ENCODE measurements at regions of chr22 and their contacts with region 1.

Region 1: DNA sequence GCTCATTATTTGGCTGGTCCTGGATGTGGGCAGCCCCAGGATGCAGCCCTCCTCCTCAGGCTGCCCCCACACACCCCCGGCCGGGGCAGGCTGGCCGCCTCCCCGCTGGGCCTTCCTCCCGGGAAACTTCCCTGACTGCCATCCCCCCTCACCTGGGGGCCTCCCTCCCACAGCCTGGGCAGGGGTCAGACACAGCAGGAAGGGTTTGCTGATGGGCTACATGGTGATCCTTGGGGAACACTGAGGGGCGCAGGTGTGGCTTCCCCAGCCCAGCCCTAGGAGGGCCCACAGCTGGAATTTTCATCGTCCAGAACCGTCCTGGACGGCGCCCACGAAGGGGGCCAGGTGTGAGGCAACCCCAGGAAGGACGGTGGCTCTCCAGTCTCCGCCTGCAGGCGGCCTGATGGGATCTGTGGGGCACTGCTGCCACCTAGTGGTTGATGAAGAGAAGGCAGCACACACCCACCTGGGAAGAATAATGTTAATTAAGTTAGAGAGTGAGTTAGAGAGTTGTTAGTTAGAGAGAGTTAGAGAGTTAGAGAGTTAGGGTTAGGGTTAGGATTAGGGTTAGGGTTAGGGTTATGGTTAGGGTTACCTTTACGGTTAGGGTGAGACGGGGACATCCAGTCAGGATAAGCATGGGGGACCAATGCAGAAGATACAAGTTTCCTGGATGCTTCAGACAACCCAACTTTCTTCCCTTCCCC is 75.9 kb upstream of the PRR5 start:
- DNase-seq: peak; percentile 70 to 81 (median 76)
- ATAC-seq: peak; percentile 88
- H3K4me3 ChIP-seq: no peak overlapping the region
- H3K27ac ChIP-seq: no peak overlapping the region
- H3K4me1 ChIP-seq: peaks cover 0 to 7% of the 10 kb centered on the region in 2 experiments; a peak in 2 of 5 replicates
- H3K27me3 ChIP-seq: peaks cover 0 to 12% of the 10 kb centered on the region in 2 experiments; a peak in 3 of 5 replicates
- CTCF ChIP-seq: peak; percentile 88 to 98 (median 96)
- EP300 ChIP-seq: no peak
- POLR2A ChIP-seq: no peak
- RAD21 ChIP-seq: peak; percentile 72 to 86

Region 2: GRCh38 chr22:43385770-43386641 is 1240.1 kb before region 1 on chr22:
- CTCF ChIA-PET with region 1: no interaction called
- POLR2A ChIA-PET with region 1: no interaction called
- in situ Hi-C with region 1: loop called (anchors 10 kb)
- intact Hi-C with region 1: loop called (anchors 5 kb)
- DNase-seq: peak; percentile 72 to 75 (median 74)
- ATAC-seq: peak; percentile 98
- H3K4me3 ChIP-seq: no peak overlapping the region
- H3K27ac ChIP-seq: no peak overlapping the region
- H3K4me1 ChIP-seq: peaks cover 0 to 8% of the 10 kb centered on the region in 2 experiments; a peak in 2 of 5 replicates
- H3K27me3 ChIP-seq: peaks cover 0 to 5% of the 10 kb centered on the region in 2 experiments; a peak in 1 of 5 replicates
- CTCF ChIP-seq: peak; percentile 79 to 87 (median 86)
- EP300 ChIP-seq: no peak
- POLR2A ChIP-seq: no peak
- RAD21 ChIP-seq: peak; percentile 67 to 90

Region 3: GRCh38 chr22:43884600-43885325 is 741.4 kb before region 1 on chr22:
- CTCF ChIA-PET with region 1: interaction called, 3 read pairs
- POLR2A ChIA-PET with region 1: no interaction called
- in situ Hi-C with region 1: no loop called
- intact Hi-C with region 1: loop called (anchors 10 kb)
- DNase-seq: peak; percentile 63 to 75 (median 70)
- ATAC-seq: peak; percentile 76
- H3K4me3 ChIP-seq: no peak overlapping the region
- H3K27ac ChIP-seq: no peak overlapping the region
- H3K4me1 ChIP-seq: peaks cover 0 to 4% of the 10 kb centered on the region in 2 experiments; a peak in 1 of 5 replicates
- H3K27me3 ChIP-seq: no peaks in the 10 kb centered on the region
- CTCF ChIP-seq: peak; percentile 68 to 71 (median 68)
- EP300 ChIP-seq: no peak
- POLR2A ChIP-seq: no peak
- RAD21 ChIP-seq: peak in 1 of 2 experiments; percentile 54; a peak in 2 of 4 replicates

Region 4: GRCh38 chr22:44003405-44004103 is 622.6 kb before region 1 on chr22:
- CTCF ChIA-PET with region 1: no interaction called
- POLR2A ChIA-PET with region 1: no interaction called
- in situ Hi-C with region 1: loop called (anchors 10 kb)
- intact Hi-C with region 1: loop called (anchors 10 kb)
- DNase-seq: peak; percentile 23 to 51 (median 36)
- ATAC-seq: peak; percentile 91
- H3K4me3 ChIP-seq: no peak overlapping the region
- H3K27ac ChIP-seq: no peak overlapping the region
- H3K4me1 ChIP-seq: peaks cover 7% of the 10 kb centered on the region in 2 experiments; a peak in 4 of 5 replicates
- H3K27me3 ChIP-seq: no peaks in the 10 kb centered on the region
- CTCF ChIP-seq: peak; percentile 50 to 66 (median 62)
- EP300 ChIP-seq: no peak
- POLR2A ChIP-seq: no peak
- RAD21 ChIP-seq: peak; percentile 31 to 52

Region 5: DNA sequence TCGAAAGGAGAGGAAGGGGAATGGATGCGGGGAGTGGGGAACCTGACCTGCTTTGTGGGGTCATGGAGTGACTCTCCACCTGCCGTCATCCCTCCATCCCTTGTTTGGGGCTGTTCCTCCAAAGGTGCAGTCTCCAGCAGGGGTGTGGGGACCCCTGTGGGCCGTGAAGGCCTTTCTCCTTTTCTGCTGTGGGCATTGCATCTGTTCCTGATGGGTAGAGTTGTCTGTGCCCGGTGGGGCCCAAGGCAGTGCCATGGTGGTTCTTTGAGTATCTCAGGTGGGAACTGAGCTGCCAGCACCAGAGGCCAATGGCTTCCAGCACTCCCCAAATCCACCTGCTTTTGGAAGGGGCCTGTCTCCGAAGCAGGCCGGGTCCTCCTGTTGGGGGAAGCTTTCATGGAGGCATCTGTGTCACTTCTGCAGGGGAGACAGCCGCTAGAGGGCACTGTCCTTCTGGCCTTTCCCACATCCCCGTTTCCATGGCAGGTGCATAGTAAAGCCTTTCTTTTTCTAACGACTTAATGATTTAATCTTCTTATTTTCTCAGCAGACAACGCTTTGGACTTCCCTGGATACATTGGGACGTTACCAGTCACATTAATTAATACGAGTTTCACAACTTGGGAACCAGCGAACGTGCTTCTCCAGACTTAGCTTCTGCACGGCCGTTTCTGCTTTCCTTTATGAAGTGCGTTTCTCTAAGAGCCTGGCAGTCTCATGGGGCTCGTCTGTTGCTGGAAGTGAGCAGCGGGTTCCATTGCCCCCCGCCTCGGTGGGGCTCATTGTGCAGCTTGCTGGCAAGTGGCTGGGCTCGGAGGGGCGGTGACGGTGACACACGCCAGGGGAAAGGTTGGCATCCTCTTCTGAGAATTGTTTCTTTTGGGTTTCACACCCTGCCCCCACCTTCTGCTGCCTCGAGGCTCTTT is 544.9 kb before region 1 on chr22:
- CTCF ChIA-PET with region 1: no interaction called
- POLR2A ChIA-PET with region 1: no interaction called
- in situ Hi-C with region 1: loop called (anchors 10 kb)
- intact Hi-C with region 1: loop called (anchors 10 kb)
- DNase-seq: peak; percentile 66 to 72 (median 67)
- ATAC-seq: peak; percentile 82
- H3K4me3 ChIP-seq: no peak overlapping the region
- H3K27ac ChIP-seq: no peak overlapping the region
- H3K4me1 ChIP-seq: peaks cover 0 to 7% of the 10 kb centered on the region in 2 experiments; a peak in 1 of 5 replicates
- H3K27me3 ChIP-seq: no peaks in the 10 kb centered on the region
- CTCF ChIP-seq: peak; percentile 58 to 80 (median 61)
- EP300 ChIP-seq: no peak
- POLR2A ChIP-seq: no peak
- RAD21 ChIP-seq: peak in 1 of 2 experiments; percentile 48; a peak in 3 of 4 replicates

Region 6: DNA sequence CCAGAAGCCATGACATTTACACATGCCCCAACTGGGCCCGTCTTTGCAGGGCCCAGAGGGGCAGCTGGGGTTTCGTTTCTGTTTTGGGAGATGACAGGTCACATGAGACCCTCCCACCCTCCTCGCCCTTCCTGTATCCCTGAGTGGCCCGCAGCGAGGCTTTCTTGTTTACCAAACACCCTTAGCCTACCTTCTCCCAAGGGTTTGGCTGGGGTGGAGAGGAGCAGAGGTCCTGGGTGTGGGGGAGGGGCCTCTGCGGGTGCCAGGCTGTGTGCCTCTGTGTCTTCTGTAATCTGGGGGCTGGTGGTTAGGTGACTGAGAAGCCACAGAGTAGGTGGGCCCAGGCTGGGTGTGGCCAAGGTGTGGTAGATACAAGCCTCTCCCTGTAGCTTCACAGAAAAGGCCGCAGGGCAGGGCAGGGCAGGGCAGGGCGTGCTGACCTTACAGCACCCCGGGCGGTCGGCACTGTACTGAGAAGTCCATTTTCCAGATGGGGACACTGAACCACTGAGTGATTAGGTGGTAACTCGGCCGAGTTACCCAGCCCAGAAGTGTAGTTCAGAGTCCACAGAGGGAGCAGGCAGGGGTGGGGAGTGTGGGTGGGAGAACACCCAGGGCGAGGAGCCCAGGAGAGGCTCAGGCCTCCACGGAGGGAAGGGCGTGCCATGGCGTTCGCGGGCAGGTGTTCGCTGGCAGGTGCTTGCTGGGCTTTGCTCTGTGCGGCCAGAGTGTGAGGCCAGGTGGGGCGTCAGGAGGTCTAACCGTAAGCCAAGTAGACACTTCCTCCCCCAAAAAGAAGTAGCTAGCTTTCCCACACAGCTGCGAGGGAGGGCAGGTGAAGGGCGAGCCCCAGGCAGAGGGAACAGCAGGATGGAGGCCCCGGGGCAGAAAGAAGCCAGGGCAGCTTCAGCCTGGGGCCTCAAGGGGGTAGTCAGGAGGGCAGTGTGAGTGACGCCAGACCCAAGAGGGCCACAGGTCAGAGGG is 84.6 kb after region 1 on chr22:
- CTCF ChIA-PET with region 1: no interaction called
- POLR2A ChIA-PET with region 1: no interaction called
- in situ Hi-C with region 1: no loop called
- intact Hi-C with region 1: no loop called
- DNase-seq: peak in 3 of 4 experiments; percentile 15 to 34 (median 22)
- ATAC-seq: peak; percentile 72
- H3K4me3 ChIP-seq: no peak overlapping the region
- H3K27ac ChIP-seq: no peak overlapping the region; the same call in 2 of the 3 replicates
- H3K4me1 ChIP-seq: peaks cover 5 to 44% of the 10 kb centered on the region in 2 experiments; a peak in 3 of 5 replicates
- H3K27me3 ChIP-seq: no peaks in the 10 kb centered on the region
- CTCF ChIP-seq: no peak
- EP300 ChIP-seq: no peak
- POLR2A ChIP-seq: no peak
- RAD21 ChIP-seq: no peak

Measured in K562 (cell line).